K562 (cell line): ENCODE measurements at regions of chr14 and their contacts with region 1.

Region 1: DNA sequence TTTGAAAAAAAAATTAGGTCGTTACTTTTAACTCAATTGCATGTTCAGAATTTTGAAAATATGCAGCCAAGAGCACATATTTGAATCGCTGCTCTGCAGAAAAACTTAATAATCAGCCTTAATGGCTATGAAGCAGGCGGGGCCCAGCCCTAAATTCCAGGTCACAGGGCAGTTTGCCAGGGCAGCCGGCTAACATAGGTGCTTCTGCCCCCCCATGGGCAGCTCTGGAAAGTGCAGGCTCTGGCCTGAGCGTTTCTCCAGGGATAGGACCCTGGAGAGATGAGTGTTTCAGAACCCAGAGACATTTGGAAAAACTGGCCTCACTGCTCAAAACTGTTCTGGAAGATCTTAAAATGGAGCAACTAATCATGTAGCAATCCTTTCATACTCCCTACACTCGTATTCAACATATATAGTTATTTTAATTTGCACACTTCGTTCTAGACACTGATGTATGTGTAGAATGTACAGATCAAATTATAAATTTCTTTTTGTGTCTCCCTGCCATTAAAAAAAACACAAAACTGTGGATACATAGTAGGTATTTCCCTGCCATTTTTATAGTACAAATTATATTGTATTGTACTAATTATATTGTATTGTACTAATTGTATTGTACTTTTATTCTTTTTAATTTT is 26.0 kb upstream of the PTGR2 start:
- DNase-seq: peak; percentile 80 to 91 (median 84)
- ATAC-seq: peak; percentile 97
- H3K4me3 ChIP-seq: no peak overlapping the region
- H3K27ac ChIP-seq: no peak overlapping the region
- H3K4me1 ChIP-seq: peaks cover 0 to 10% of the 10 kb centered on the region in 2 experiments; a peak in 3 of 5 replicates
- H3K27me3 ChIP-seq: no peaks in the 10 kb centered on the region
- CTCF ChIP-seq: peak; percentile 82 to 87 (median 87)
- EP300 ChIP-seq: peak; percentile 40; the same call in 1 of the 2 replicates
- POLR2A ChIP-seq: no peak
- RAD21 ChIP-seq: peak; percentile 89 to 94

Region 2: DNA sequence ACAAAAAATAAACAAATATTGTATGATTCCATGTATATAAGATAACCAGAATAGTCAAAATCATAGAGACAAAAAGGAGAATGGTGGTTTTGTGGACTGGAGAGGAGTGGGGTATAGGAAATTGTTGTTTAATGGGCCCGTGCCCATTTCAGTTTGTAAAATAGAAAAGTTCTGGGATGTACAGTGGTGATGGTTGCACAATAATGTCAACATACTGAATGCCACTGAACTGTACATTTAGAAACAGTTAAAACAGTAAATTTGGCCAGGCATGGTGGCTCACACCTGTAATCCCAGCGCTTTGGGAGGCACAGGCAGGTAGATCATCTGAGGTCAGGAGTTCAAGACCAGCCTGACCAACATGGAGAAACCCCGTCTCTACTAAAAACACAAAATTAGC is 407.4 kb before region 1 on chr14:
- CTCF ChIA-PET with region 1: no interaction called
- POLR2A ChIA-PET with region 1: no interaction called
- in situ Hi-C with region 1: no loop called
- intact Hi-C with region 1: no loop called
- DNase-seq: no peak
- ATAC-seq: no peak
- H3K4me3 ChIP-seq: no peak overlapping the region
- H3K27ac ChIP-seq: no peak overlapping the region
- H3K4me1 ChIP-seq: no peaks in the 10 kb centered on the region; a peak in 2 of 5 replicates
- H3K27me3 ChIP-seq: no peaks in the 10 kb centered on the region
- CTCF ChIP-seq: no peak
- EP300 ChIP-seq: no peak
- POLR2A ChIP-seq: no peak
- RAD21 ChIP-seq: no peak

Region 3: GRCh38 chr14:73741386-73741875 is 84.2 kb before region 1 on chr14:
- CTCF ChIA-PET with region 1: no interaction called
- POLR2A ChIA-PET with region 1: no interaction called
- in situ Hi-C with region 1: no loop called
- intact Hi-C with region 1: loop called (anchors 5 kb)
- DNase-seq: peak; percentile 90 to 93 (median 92)
- ATAC-seq: peak; percentile 82
- H3K4me3 ChIP-seq: peak overlapping the region; percentile 17; the same call in 1 of the 2 replicates
- H3K27ac ChIP-seq: peak overlapping the region; percentile 86
- H3K4me1 ChIP-seq: peaks cover 56 to 78% of the 10 kb centered on the region in 2 experiments
- H3K27me3 ChIP-seq: no peaks in the 10 kb centered on the region
- CTCF ChIP-seq: peak; percentile 13 to 15 (median 15); a peak in 2 of 6 replicates
- EP300 ChIP-seq: peak; percentile 85
- POLR2A ChIP-seq: no peak
- RAD21 ChIP-seq: no peak

Region 4: GRCh38 chr14:73785873-73786695 is 39.6 kb before region 1 on chr14:
- CTCF ChIA-PET with region 1: no interaction called
- POLR2A ChIA-PET with region 1: interaction called, 4 read pairs
- in situ Hi-C with region 1: no loop called
- intact Hi-C with region 1: loop called (anchors 2 kb)
- DNase-seq: peak; percentile 46 to 77 (median 50)
- ATAC-seq: peak; percentile 85
- H3K4me3 ChIP-seq: peak overlapping the region; percentile 70
- H3K27ac ChIP-seq: peak overlapping the region; percentile 97
- H3K4me1 ChIP-seq: peaks cover 43 to 49% of the 10 kb centered on the region in 2 experiments
- H3K27me3 ChIP-seq: no peaks in the 10 kb centered on the region
- CTCF ChIP-seq: peak in 1 of 3 experiments; percentile 17; a peak in 1 of 6 replicates
- EP300 ChIP-seq: peak; percentile 63
- POLR2A ChIP-seq: peak; percentile 63
- RAD21 ChIP-seq: no peak; a peak in 1 of 4 replicates

Region 5: DNA sequence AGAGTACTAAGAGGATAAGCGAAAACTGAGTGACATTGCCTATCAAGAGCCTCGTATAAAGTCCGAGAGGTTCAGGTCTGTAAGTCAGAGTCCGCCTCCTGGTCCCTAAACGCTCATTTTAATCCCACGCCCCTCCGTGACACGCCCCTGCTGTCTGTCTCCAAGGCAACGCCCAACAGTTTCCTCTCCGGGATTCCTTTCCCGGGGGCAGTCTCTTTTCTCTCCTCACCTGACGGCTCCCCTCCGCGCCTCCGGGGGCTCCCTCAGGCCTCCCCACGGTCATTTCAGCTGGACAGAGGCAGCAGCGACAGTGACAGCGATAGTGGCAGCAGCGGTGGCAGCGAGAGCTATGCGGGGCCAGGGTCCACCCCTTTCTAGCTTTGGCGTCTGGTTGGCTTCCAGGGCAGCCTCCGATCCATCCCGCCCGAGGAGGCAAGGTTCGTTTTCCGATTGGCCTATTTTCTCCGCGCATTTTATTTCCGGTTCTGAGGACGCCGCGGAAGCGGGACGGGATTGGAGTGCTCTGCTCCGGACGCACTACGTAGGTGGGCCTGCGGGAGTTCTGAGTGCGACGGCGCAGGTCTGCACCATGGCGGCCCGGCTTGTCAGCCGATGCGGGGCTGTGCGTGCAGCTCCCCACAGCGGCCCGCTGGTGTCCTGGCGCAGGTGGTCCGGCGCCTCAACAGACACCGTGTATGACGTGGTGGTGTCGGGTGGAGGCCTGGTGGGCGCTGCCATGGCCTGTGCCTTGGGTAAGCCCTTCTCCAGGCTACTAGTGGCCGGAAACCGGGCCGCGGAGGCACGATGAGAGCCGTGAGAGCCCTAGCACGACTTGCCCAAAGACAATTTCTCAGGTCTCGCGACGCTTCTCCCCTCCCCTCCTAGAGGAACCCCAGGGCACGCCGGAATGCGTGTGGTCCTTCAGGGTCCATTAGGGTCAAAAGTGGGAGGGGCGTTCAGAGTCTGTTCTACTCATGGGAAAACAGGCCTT is 124.4 kb after region 1 on chr14 and contains the starts of genes COQ6 and FAM161B:
- CTCF ChIA-PET with region 1: no interaction called
- POLR2A ChIA-PET with region 1: no interaction called
- in situ Hi-C with region 1: no loop called
- intact Hi-C with region 1: loop called (anchors 10 kb)
- DNase-seq: peak; percentile 76 to 95 (median 80)
- ATAC-seq: peak; percentile 96
- H3K4me3 ChIP-seq: peak within 1 kb of the TSS; percentile 64
- H3K27ac ChIP-seq: peak within 1 kb of the TSS; percentile 94
- H3K4me1 ChIP-seq: peaks cover 0 to 3% of the 10 kb centered on the region in 2 experiments; a peak in 2 of 5 replicates
- H3K27me3 ChIP-seq: no peaks in the 10 kb centered on the region
- CTCF ChIP-seq: peak; percentile 27 to 54 (median 31); a peak in 3 of 6 replicates
- EP300 ChIP-seq: no peak
- POLR2A ChIP-seq: peak; percentile 96
- RAD21 ChIP-seq: no peak; a peak in 1 of 4 replicates
- polyA plus RNA-seq, gene COQ6: 4.3 to 7.0 TPM
- polyA plus RNA-seq, gene FAM161B: 0.15 to 0.24 TPM

Region 6: GRCh38 chr14:74105381-74105780 is 279.7 kb after region 1 on chr14:
- CTCF ChIA-PET with region 1: no interaction called
- POLR2A ChIA-PET with region 1: no interaction called
- in situ Hi-C with region 1: no loop called
- intact Hi-C with region 1: no loop called
- DNase-seq: no peak
- ATAC-seq: no peak
- H3K4me3 ChIP-seq: no peak overlapping the region
- H3K27ac ChIP-seq: no peak overlapping the region
- H3K4me1 ChIP-seq: no peaks in the 10 kb centered on the region
- H3K27me3 ChIP-seq: no peaks in the 10 kb centered on the region
- CTCF ChIP-seq: no peak
- EP300 ChIP-seq: no peak
- POLR2A ChIP-seq: no peak
- RAD21 ChIP-seq: no peak